ENCODE measurements at regions of chr15 and their contacts with region 1.

Region 1: GRCh38 chr15:51380999-51381795 is 39.7 kb downstream of the GLDN start:
- DNase-seq: no peak
- H3K4me3 ChIP-seq: no peak overlapping the region
- H3K27me3 ChIP-seq: peaks cover 2% of the 10 kb centered on the region; the same call in 1 of the 2 replicates
- CTCF ChIP-seq: peak; percentile 88

Region 2: DNA sequence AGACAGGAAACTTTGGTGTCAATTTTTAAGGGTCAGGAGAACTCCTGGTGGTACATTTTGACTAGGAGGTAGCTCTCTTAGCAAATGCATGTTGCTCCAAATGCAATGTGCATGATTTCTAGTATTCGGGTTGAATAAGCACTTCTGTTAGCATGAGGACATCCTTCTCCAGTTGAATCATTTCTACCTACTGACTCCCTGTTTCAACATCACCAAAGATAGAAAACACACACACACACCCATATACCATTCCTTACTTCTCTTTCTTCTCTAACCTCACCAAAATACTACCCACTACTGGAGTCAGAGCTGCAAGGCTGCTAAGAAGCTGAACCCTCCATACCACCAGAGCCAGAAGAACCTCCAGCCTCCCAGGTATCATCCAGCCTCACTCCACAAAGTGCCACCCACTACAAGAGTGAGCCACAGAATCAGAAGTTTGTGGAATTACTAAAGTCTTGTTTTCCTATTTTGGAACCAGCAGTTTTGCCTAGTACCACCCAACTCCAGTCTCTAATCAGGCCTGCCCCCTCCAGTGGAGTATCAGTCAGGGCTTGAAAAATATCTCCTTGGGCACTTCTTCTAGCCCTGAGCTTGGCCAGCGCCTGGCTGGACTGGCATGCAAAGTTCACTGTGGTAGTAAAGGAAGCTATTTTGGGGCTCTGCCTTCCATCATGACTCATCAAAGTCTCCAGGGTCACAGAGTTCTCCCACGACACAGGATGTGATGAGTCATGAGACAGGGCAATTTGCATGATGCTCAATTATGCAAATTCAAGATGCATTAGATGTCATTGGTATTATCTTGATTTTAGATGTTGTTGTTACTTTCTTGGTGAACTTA is 153.0 kb before region 1 on chr15:
- CTCF ChIA-PET with region 1: interaction called, 126 read pairs
- POLR2A ChIA-PET with region 1: no interaction called
- DNase-seq: peak; percentile 67
- H3K4me3 ChIP-seq: no peak overlapping the region
- H3K27me3 ChIP-seq: no peaks in the 10 kb centered on the region
- CTCF ChIP-seq: no peak

Region 3: GRCh38 chr15:51267703-51268083 is 113.5 kb before region 1 on chr15:
- CTCF ChIA-PET with region 1: interaction called, 27 read pairs
- POLR2A ChIA-PET with region 1: no interaction called
- DNase-seq: no peak
- H3K4me3 ChIP-seq: peak overlapping the region; percentile 34
- H3K27me3 ChIP-seq: peaks cover 8% of the 10 kb centered on the region
- CTCF ChIP-seq: no peak

Region 4: DNA sequence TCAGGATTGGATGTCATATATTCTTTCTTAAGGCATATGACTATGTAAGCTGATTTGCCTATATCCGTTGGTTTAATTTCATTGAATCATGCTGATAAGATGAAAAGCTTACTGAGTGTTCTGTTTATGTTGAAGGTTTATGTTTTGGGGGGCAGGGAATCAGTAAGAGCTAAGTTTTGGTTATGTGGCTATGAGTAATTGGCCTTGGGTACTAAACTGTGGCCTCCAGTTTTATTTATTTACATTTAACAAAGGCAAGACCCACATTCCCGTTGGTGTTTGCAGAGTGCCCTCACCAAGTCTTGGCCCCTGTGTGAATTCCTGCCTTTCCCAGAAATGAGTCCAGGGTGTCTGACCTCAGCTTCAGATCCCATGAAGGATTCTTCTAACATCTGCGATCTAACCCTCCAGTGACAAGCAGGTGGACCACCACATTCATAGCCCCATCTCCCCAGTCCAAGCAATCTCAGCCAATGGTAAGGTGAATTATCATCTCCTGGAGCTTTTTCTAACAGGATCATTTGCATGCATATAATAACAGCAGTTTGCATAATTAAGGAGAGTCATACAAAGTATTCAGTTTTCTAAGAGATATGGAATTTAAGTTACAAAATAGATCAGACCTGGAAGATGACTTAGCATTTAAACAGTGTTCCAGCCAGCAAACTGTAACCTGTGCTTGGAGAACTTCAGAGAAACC is 12.3 kb before region 1 on chr15:
- CTCF ChIA-PET with region 1: interaction called, 36 read pairs
- POLR2A ChIA-PET with region 1: no interaction called
- DNase-seq: no peak
- H3K4me3 ChIP-seq: no peak overlapping the region
- H3K27me3 ChIP-seq: no peaks in the 10 kb centered on the region; the same call in 1 of the 2 replicates
- CTCF ChIP-seq: no peak

Measured in BJ (cell line).